A673 (cell line): ENCODE measurements at regions of chr14 and their contacts with region 1.

Region 1: GRCh38 chr14:55160989-55161388 is 30.4 kb downstream of the DLGAP5 start:
- DNase-seq: peak; percentile 48
- H3K4me3 ChIP-seq: no peak overlapping the region
- H3K27ac ChIP-seq: no peak overlapping the region
- H3K4me1 ChIP-seq: no peaks in the 10 kb centered on the region
- H3K27me3 ChIP-seq: no peaks in the 10 kb centered on the region
- CTCF ChIP-seq: peak; percentile 57

Region 2: DNA sequence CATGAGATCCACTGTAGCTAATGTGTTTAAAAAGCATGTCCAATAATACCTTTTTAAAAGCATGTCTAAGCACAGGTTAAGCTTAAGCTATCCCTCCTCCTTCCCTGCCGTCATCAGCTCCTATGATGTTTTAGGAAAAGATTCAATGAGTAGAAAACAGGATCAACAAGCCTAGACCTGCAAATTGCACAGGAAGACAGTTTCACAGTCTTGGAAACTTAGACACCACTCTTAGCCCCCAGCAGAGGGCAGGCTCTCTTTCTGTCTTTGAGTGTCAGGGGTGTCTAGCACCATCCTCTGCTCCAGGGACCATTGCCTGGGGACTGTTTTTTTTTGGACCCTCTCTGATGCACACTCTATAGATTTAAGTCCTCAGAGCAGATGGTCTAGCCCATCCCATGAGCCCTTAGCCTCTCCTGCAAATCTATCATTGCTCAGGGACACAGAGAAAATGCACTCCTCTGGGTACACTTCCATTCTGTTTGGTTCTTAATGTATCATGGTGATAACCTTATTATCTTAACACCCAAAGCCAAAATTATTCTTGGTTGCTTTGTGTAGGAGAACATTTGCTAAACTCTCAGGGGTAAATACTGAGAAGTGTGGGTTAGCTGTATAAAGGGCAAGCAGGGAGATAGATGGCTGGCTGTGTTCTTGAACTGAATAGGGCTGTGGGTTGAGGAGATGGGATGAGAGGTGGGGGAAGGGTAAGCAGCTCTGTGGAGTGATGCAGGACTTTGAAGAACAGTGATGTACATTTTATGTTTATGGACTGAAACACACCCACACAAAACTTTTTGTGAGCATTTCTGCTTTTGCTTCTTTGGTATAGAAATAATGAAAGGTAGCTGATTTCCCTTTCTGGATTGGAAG is 1748.0 kb before region 1 on chr14:
- CTCF ChIA-PET with region 1: no interaction called
- POLR2A ChIA-PET with region 1: interaction called, 12 read pairs
- intact Hi-C with region 1: no loop called
- DNase-seq: peak; percentile 25
- H3K4me3 ChIP-seq: no peak overlapping the region
- H3K27ac ChIP-seq: no peak overlapping the region
- H3K4me1 ChIP-seq: no peaks in the 10 kb centered on the region
- H3K27me3 ChIP-seq: no peaks in the 10 kb centered on the region
- CTCF ChIP-seq: peak; percentile 68

Region 3: GRCh38 chr14:55088356-55088755 is 72.6 kb before region 1 on chr14:
- CTCF ChIA-PET with region 1: interaction called, 16 read pairs
- POLR2A ChIA-PET with region 1: no interaction called
- intact Hi-C with region 1: loop called (anchors 1 kb)
- DNase-seq: no peak
- H3K4me3 ChIP-seq: no peak overlapping the region
- H3K27ac ChIP-seq: no peak overlapping the region
- H3K4me1 ChIP-seq: peaks cover 16% of the 10 kb centered on the region
- H3K27me3 ChIP-seq: no peaks in the 10 kb centered on the region
- CTCF ChIP-seq: no peak